OCI-LY7 (cell line): ENCODE measurements at regions of chr10 and their contacts with region 1.

Region 1: GRCh38 chr10:26169466-26169865 is 47.1 kb upstream of the GAD2 start:
- DNase-seq: no peak
- H3K4me3 ChIP-seq: no peak overlapping the region
- H3K27ac ChIP-seq: no peak overlapping the region
- H3K4me1 ChIP-seq: no peaks in the 10 kb centered on the region
- CTCF ChIP-seq: no peak

Region 2: DNA sequence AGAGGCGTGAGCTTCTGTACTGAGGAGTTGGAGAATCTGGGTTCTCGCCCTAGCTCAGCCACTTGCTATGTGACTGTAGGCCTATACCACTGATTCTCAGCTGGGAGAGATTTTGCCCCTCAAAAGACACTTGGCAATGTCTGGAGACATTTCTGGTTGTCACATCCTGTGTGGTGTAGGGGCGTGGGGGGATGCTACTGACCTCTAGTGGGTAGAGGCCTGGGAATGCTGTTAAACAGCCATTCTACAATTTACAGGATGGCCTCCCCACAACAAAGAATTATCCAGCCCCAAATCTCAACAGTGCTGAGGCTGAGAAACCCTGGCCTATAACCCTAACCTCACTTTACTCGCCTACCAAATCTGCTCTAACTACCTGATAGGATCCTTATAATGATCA is 11.7 kb before region 1 on chr10:
- CTCF ChIA-PET with region 1: no interaction called
- POLR2A ChIA-PET with region 1: interaction called, 12 read pairs
- intact Hi-C with region 1: no loop called
- DNase-seq: peak; percentile 69
- H3K4me3 ChIP-seq: no peak overlapping the region
- H3K27ac ChIP-seq: peak overlapping the region; percentile 14
- H3K4me1 ChIP-seq: peaks cover 43% of the 10 kb centered on the region
- CTCF ChIP-seq: peak; percentile 79

Region 3: GRCh38 chr10:26259341-26259740 is 89.9 kb after region 1 on chr10:
- CTCF ChIA-PET with region 1: no interaction called
- POLR2A ChIA-PET with region 1: no interaction called
- intact Hi-C with region 1: no loop called
- DNase-seq: no peak
- H3K4me3 ChIP-seq: no peak overlapping the region
- H3K27ac ChIP-seq: no peak overlapping the region
- H3K4me1 ChIP-seq: no peaks in the 10 kb centered on the region
- CTCF ChIP-seq: no peak

Region 4: GRCh38 chr10:26391701-26392695 is 222.5 kb after region 1 on chr10:
- CTCF ChIA-PET with region 1: no interaction called
- POLR2A ChIA-PET with region 1: no interaction called
- intact Hi-C with region 1: no loop called
- DNase-seq: peak; percentile 32
- H3K4me3 ChIP-seq: no peak overlapping the region
- H3K27ac ChIP-seq: no peak overlapping the region
- H3K4me1 ChIP-seq: peaks cover 17% of the 10 kb centered on the region
- CTCF ChIP-seq: no peak